Activated naive CD4-positive, alpha-beta T cell treated with anti-CD3 and anti-CD28 coated beads for 36 hours (primary cell): ENCODE measurements at regions of chr1 and their contacts with region 1.

Region 1: DNA sequence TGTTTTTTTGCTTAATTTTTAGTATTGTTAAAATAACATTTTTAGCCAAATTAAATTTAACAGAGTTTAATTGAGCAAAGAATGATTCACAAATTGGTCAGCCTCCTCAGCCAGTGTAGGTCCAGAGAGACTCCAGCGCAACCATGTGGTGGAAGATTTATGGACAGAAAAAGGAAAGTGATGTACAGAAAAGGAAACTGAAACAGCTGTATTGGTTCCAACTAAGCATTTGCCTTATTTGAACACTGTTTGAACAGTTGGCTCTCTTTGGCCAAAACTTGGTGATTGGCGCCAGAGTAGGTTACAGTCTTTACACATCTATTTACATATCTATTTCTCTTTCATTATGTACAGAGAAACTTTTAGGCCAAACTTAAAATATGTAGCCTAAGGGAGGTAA is 19.4 kb downstream of the RPS6KC1 start:
- DNase-seq: peak; percentile 60
- H3K4me3 Mint-ChIP-seq: no peak overlapping the region
- H3K27ac Mint-ChIP-seq: no peak overlapping the region
- H3K4me1 Mint-ChIP-seq: peaks cover 13% of the 10 kb centered on the region
- H3K27me3 Mint-ChIP-seq: no peaks in the 10 kb centered on the region

Region 2: GRCh38 chr1:212218911-212219310 is 851.5 kb before region 1 on chr1:
- CTCF ChIA-PET with region 1: no interaction called
- intact Hi-C with region 1: no loop called
- DNase-seq: peak; percentile 50
- H3K4me3 Mint-ChIP-seq: no peak overlapping the region
- H3K27ac Mint-ChIP-seq: peak overlapping the region; percentile 21
- H3K4me1 Mint-ChIP-seq: peaks cover 20% of the 10 kb centered on the region
- H3K27me3 Mint-ChIP-seq: no peaks in the 10 kb centered on the region

Region 3: GRCh38 chr1:212595787-212596714 is 474.4 kb before region 1 on chr1:
- CTCF ChIA-PET with region 1: no interaction called
- intact Hi-C with region 1: loop called (anchors 1 kb)
- DNase-seq: peak; percentile 69
- H3K4me3 Mint-ChIP-seq: peak overlapping the region; percentile 44
- H3K27ac Mint-ChIP-seq: peak overlapping the region; percentile 94
- H3K4me1 Mint-ChIP-seq: peaks cover 34% of the 10 kb centered on the region
- H3K27me3 Mint-ChIP-seq: peaks cover 21% of the 10 kb centered on the region

Region 4: GRCh38 chr1:212994926-212995325 is 75.5 kb before region 1 on chr1:
- CTCF ChIA-PET with region 1: no interaction called
- intact Hi-C with region 1: loop called (anchors 1 kb)
- DNase-seq: no peak
- H3K4me3 Mint-ChIP-seq: no peak overlapping the region
- H3K27ac Mint-ChIP-seq: no peak overlapping the region
- H3K4me1 Mint-ChIP-seq: peaks cover 4% of the 10 kb centered on the region
- H3K27me3 Mint-ChIP-seq: no peaks in the 10 kb centered on the region

Region 5: GRCh38 chr1:213003256-213003655 is 67.2 kb before region 1 on chr1:
- CTCF ChIA-PET with region 1: interaction called, 3 read pairs
- intact Hi-C with region 1: loop called (anchors 1 kb)
- DNase-seq: peak; percentile 49
- H3K4me3 Mint-ChIP-seq: no peak overlapping the region
- H3K27ac Mint-ChIP-seq: peak overlapping the region; percentile 67
- H3K4me1 Mint-ChIP-seq: peaks cover 10% of the 10 kb centered on the region
- H3K27me3 Mint-ChIP-seq: no peaks in the 10 kb centered on the region

Region 6: DNA sequence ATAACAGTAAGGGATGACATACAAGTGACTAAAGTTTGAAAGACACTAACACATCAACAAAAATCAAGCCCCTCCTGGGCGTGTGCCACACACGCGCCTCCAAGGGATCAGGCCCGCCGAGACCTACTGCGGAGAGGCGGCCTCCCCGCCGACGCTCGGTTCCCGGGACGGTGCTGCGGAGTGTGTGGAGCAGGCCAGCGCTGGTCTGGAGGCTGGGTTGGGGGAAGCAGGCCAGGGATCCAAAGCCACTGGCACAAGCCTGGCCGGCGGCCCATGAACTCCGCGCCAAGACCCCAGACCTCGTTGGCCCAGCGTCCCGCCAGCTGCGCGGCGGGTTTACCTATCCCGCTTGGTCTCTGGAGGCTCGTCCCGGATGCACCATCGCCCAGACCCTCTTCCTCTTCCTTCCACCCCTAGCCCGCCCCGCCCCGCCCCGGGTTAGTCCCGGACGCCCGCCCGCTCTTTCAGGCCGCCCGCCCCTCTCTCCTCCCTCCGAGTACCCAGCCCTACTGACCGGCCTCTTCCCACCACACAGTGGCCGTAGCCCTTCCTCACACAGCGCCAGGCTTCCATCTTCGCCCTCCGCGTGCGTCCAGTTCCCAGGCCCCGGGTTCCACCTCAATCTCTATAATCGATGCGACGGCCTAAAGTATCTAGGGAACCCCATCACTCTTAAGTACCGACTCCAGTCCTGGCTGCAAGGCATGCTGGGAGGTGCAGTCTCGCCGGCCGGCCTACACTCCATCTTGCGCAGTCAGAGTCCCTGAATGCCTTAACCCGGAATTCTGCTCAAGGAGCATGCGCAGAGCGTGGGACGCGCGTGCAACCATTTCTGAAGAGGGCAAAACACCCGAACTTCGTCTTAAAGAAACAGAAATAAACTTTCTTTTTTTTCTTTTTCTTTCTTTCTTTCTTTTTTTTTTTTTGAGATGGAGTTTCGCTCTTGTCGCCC is 55.0 kb before region 1 on chr1 and contains the start of gene ANGEL2:
- CTCF ChIA-PET with region 1: interaction called, 3 read pairs
- intact Hi-C with region 1: loop called (anchors 1 kb)
- DNase-seq: peak; percentile 97
- H3K4me3 Mint-ChIP-seq: peak within 1 kb of the TSS; percentile 100
- H3K27ac Mint-ChIP-seq: peak within 1 kb of the TSS; percentile 99
- H3K4me1 Mint-ChIP-seq: peaks cover 27% of the 10 kb centered on the region
- H3K27me3 Mint-ChIP-seq: no peaks in the 10 kb centered on the region
- total RNA-seq, gene ANGEL2: 39.5 to 42.9 TPM

Region 7: DNA sequence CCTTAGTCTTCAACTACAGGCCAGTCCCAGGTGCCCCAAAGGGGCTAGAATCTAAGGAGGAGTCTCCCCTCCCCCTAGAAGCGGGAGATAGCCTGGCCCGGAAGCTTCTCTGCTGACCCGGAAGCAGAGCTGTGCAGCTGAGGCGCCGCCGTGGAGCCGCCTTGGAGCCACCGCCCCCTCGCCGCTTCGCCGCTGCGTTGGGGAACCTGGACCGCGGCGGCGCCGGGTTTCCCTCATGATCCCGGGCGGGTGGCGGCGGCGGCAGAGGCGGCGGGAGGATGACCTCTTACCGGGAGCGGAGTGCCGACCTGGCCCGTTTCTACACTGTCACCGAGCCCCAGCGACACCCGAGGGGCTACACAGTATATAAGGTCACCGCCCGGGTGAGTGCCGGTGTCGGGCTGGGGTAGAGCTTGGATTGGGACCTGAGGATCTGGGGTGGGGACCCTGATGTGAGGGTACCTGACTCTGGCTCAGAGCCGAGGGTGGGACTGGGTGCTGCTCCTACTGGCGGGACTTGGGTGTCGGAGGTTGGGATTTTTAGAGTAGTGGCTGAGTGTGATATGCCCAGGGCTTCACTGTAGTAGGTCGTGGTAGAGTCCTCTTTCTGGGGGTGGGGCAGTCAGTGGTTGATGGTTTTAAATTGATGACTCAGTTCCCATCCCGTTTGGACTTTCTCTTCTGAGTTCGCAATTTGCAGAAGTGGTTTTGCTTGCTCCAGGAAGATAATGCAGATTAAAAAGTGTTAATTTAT is 19.1 kb before region 1 on chr1 and contains the start of gene RPS6KC1:
- CTCF ChIA-PET with region 1: interaction called, 3 read pairs
- intact Hi-C with region 1: loop called (anchors 1 kb)
- DNase-seq: peak; percentile 88
- H3K4me3 Mint-ChIP-seq: peak within 1 kb of the TSS; percentile 97
- H3K27ac Mint-ChIP-seq: peak within 1 kb of the TSS; percentile 82
- H3K4me1 Mint-ChIP-seq: peaks cover 30% of the 10 kb centered on the region
- H3K27me3 Mint-ChIP-seq: peaks cover 13% of the 10 kb centered on the region
- total RNA-seq, gene RPS6KC1: 5.4 to 6.1 TPM

Region 8: DNA sequence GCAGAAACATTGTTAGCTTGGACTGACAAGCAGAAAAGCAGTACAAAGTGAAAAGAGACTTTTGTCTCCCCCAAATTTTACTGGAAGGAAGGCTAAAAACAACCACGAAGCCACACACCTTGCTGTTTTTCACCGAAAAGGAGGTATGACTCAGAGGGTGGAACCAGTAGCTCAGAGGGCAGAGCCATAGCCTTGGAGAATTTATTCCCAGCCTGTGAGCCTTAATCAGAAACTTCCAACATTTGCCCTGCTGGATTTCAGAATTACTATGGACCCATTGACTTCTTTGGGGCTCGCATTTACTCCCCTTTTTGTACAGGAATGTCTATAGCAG is 12.7 kb after region 1 on chr1:
- CTCF ChIA-PET with region 1: interaction called, 3 read pairs
- intact Hi-C with region 1: loop called (anchors 1 kb)
- DNase-seq: peak; percentile 43
- H3K4me3 Mint-ChIP-seq: no peak overlapping the region
- H3K27ac Mint-ChIP-seq: no peak overlapping the region
- H3K4me1 Mint-ChIP-seq: peaks cover 14% of the 10 kb centered on the region
- H3K27me3 Mint-ChIP-seq: no peaks in the 10 kb centered on the region